ENCODE measurements at regions of chrX and their contacts with region 1.

Region 1: DNA sequence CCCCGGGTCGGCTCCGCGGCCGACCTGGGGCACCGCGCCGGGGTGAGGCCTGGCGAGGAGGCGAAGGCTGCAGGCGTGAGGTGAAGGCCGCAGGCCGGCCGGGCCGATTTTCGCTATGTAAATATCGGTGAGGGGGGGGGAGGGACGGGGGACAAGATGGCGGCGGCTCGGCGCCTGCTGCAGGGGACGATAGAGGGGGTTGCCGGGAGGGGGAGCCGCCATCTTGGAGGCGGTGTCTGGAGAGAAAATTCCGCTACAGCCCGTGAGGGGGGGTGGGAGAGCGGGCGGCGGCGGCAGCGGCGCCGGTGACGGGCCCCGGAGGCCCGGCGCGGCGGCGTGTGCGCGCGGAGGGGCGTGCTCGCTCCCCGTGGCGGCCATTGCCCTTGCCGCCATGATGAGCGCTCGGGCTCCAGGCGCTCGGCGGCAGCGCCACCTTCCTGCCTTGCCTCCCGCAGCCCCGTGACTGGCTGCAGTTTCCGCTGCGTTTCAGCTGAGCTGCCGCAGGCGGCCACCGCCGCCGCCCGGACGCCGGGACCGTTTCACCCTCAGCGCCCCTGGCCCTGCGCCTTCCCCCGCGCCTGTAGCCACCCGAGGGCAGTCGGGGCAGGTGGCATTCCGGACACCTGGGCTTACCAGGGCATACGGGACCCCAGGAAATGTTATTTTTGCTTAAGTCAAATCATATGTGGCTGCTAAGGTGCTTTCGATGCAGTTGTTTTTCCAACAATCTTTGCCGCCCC is 692 bp downstream of the ZFX start:
- DNase-seq: peak in 8 of 9 donors; percentile 67 to 95 (median 90)
- ATAC-seq: peak; percentile 89
- H3K4me3 ChIP-seq: peak overlapping the region; percentile 84
- H3K4me3 Mint-ChIP-seq: peak overlapping the region; percentile 85 to 97 (median 91)
- H3K27ac ChIP-seq: peak overlapping the region; percentile 98
- H3K27ac Mint-ChIP-seq: peak overlapping the region; percentile 83 to 94 (median 91)
- H3K4me1 ChIP-seq: peaks cover 28% of the 10 kb centered on the region in 2 donors
- H3K4me1 Mint-ChIP-seq: peaks cover 16 to 83% (median 66%) of the 10 kb centered on the region in 7 donors
- H3K27me3 ChIP-seq: no peaks in the 10 kb centered on the region
- H3K27me3 Mint-ChIP-seq: no peaks in the 10 kb centered on the region

Region 2: DNA sequence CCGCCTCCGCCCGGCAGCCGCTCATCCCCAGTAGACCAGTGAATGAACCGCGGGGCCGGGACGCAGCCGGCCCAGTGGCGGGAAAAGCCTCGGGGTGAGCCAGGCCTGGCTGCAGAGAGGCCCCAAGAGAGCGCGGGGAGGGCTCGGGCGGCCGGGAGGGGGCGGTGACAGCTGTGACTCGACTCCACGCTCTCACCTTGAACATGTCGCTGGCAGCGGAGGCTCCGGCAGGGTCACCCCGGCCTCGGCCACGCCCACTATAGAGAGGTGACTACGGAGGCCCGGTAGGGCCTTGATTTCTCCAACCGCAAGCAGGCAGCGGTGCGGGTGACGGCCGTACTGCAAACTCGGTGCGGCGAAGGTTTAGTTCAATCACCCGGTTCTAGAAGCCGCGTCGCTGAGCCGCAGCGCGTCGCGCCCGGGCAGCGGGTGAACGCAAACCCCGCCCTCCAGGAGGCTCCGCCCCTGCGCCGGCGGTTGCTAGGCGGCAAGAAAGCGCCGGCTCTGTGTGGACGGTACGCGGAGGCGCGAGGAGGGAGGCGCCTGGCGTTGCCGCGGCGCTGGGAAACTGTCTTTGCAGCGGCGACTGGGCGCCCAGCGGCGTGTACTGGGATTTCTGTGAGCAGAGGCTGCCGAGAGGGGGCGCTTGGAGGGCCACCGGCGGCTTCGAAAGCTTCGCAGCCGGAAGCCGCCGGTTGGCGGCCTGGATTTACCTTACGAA is 242.6 kb before region 1 on chrX and contains the starts of genes APOO and CXorf58:
- CTCF ChIA-PET with region 1: no interaction called
- POLR2A ChIA-PET with region 1: no interaction called
- intact Hi-C with region 1: loop called (anchors 1 kb)
- DNase-seq: peak; percentile 80 to 94 (median 91)
- ATAC-seq: peak; percentile 95
- H3K4me3 ChIP-seq: peak within 1 kb of the TSS; percentile 62
- H3K4me3 Mint-ChIP-seq: peak within 1 kb of the TSS; percentile 79 to 88 (median 83)
- H3K27ac ChIP-seq: peak within 1 kb of the TSS; percentile 88
- H3K27ac Mint-ChIP-seq: peak within 1 kb of the TSS; percentile 85 to 94 (median 90)
- H3K4me1 ChIP-seq: peaks cover 10 to 16% of the 10 kb centered on the region in 2 donors
- H3K4me1 Mint-ChIP-seq: peaks cover 0 to 17% (median 8%) of the 10 kb centered on the region in 7 donors
- H3K27me3 ChIP-seq: no peaks in the 10 kb centered on the region
- H3K27me3 Mint-ChIP-seq: no peaks in the 10 kb centered on the region
- total RNA-seq, gene APOO: 5.4 to 19.2 (median 7.5) TPM
- total RNA-seq, gene CXorf58: not detected

Region 3: DNA sequence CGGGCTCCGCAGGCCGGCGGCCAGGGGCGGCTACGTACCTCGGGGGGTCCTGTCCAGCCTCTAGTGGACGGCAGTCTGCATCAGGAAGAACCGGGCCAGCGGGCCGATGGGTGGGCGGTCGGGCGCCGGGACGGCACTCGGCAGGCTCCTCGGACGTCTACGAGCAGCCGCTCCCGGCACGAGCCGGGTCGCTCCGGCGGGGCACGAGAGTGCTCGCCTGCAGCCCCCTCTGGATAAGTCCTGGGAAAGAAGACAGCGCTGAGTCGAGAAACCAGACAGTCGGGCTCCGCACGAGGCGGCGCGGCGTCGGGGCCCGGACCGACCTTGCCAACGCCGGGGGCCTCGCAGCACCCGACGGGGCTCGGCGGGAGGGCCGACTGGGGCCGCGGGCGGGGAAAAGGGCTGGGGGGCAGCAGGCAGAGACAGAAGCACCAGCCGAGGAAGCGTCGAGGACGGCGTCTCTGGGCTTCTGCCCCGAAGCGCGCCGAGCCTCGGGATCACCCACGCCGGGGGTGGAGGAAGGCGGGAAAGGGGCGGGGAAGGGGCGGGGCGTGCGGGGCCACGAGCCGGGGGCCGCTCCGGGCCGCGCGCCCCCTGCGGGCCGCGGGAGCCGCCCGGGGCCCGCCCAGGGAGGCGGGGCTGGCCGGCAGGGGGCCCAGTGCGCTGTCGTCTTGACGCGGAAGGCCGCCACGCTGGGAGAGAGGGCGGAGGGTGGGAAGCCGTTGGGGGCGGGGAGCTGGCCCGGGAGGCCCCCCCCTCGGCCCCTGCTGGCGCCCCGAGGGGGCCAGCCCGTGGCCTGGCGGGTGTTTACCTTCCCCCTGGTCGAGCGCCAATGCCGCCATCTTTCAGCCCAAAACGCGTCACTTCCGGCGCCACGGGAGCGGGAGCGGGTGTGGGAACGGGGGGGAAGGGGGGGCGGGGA is 125.1 kb before region 1 on chrX:
- CTCF ChIA-PET with region 1: no interaction called
- POLR2A ChIA-PET with region 1: no interaction called
- intact Hi-C with region 1: loop called (anchors 1 kb)
- DNase-seq: peak; percentile 68 to 82 (median 76)
- ATAC-seq: peak; percentile 96
- H3K4me3 ChIP-seq: peak overlapping the region; percentile 74
- H3K4me3 Mint-ChIP-seq: peak overlapping the region; percentile 71 to 94 (median 86)
- H3K27ac ChIP-seq: peak overlapping the region; percentile 96
- H3K27ac Mint-ChIP-seq: peak overlapping the region in 7 of 9 donors; percentile 48 to 92 (median 85)
- H3K4me1 ChIP-seq: no peaks in the 10 kb centered on the region
- H3K4me1 Mint-ChIP-seq: peaks cover 7 to 38% (median 27%) of the 10 kb centered on the region in 7 donors
- H3K27me3 ChIP-seq: no peaks in the 10 kb centered on the region
- H3K27me3 Mint-ChIP-seq: peaks cover 0 to 3% (median 0%) of the 10 kb centered on the region in 5 donors

Region 4: DNA sequence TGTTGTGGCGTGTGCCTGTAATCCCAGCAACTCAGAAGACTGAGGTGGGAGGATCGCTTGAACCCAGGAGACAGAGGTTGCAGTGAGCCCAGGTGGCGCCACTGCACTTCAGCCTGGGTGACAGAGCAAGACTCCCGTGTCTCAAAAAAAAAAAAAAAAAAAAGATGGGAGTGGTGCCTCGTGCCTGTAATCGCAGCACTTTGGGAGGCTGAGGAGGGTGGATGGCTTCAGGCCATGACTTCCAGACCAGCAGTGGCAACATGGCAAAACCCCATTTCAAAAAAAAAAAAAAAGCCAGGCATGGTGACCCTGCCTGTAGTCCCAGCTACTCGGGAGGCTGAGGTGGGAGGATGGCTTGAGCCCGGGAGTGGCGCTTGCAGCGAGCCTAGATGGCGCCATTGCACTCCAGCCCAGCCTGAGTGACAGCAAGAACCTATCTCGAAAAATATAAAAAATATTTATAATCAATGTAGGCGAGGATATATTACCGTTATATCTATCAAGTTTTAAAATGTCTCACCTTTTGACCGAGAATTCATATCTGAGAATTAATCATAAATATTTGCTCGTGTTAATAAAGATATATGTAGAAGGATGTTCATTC is 68.5 kb before region 1 on chrX:
- CTCF ChIA-PET with region 1: no interaction called
- POLR2A ChIA-PET with region 1: no interaction called
- intact Hi-C with region 1: loop called (anchors 1 kb)
- DNase-seq: peak; percentile 7 to 54 (median 43)
- ATAC-seq: peak; percentile 75
- H3K4me3 ChIP-seq: no peak overlapping the region
- H3K4me3 Mint-ChIP-seq: peak overlapping the region in 2 of 10 donors; percentile 23 to 38
- H3K27ac ChIP-seq: no peak overlapping the region
- H3K27ac Mint-ChIP-seq: no peak overlapping the region
- H3K4me1 ChIP-seq: no peaks in the 10 kb centered on the region
- H3K4me1 Mint-ChIP-seq: peaks cover 0 to 11% (median 7%) of the 10 kb centered on the region in 7 donors
- H3K27me3 ChIP-seq: no peaks in the 10 kb centered on the region
- H3K27me3 Mint-ChIP-seq: no peaks in the 10 kb centered on the region

Region 5: GRCh38 chrX:24184018-24184417 is 33.8 kb after region 1 on chrX:
- CTCF ChIA-PET with region 1: no interaction called
- POLR2A ChIA-PET with region 1: no interaction called
- intact Hi-C with region 1: loop called in 1 of 2 experiments (anchors 5 kb)
- DNase-seq: no peak
- ATAC-seq: no peak
- H3K4me3 ChIP-seq: no peak overlapping the region
- H3K4me3 Mint-ChIP-seq: peak overlapping the region in 4 of 10 donors; percentile 20 to 37 (median 28)
- H3K27ac ChIP-seq: no peak overlapping the region
- H3K27ac Mint-ChIP-seq: peak overlapping the region in 2 of 9 donors; percentile 19 to 48
- H3K4me1 ChIP-seq: no peaks in the 10 kb centered on the region
- H3K4me1 Mint-ChIP-seq: peaks cover 5 to 58% (median 39%) of the 10 kb centered on the region in 7 donors
- H3K27me3 ChIP-seq: no peaks in the 10 kb centered on the region
- H3K27me3 Mint-ChIP-seq: no peaks in the 10 kb centered on the region

Region 6: DNA sequence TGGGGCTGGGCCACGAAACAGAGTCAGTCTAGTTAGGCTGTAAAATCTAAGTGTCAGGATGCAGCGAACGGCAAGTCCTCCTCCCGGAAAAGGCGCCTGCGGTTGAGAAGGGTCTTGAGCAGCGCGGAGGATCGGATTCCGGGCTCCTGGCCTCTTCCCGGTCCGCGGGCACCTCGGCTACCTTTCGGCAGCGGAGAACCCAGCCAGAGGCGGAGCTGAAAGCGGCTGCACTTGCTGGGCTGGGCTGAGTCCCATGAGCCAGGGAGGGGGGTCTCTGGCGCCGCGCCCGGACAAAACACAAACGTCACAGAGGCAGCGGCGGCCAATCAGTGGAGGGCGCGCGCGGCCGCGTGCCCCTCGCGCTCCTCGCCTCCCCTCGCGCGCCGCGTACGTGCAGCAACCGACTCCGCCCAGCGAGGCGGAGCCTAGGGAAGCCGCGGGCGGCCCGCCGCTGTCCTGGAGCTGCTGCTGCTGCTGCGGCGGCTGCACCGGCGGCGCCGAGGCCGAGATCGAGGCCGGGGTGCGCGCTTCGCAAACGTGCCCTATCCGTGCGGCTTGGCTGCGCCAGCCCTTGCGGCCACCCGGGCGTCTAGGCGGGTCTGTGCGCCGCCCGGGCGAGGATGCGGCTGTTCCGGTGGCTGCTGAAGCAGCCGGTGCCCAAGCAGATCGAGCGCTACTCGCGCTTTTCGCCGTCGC is 314.8 kb after region 1 on chrX and contains the start of gene PDK3:
- CTCF ChIA-PET with region 1: no interaction called
- POLR2A ChIA-PET with region 1: no interaction called
- intact Hi-C with region 1: loop called (anchors 1 to 5 kb)
- DNase-seq: peak; percentile 81 to 92 (median 89)
- ATAC-seq: peak; percentile 98
- H3K4me3 ChIP-seq: peak within 1 kb of the TSS; percentile 70
- H3K4me3 Mint-ChIP-seq: peak within 1 kb of the TSS; percentile 48 to 90 (median 85)
- H3K27ac ChIP-seq: peak within 1 kb of the TSS; percentile 92
- H3K27ac Mint-ChIP-seq: peak within 1 kb of the TSS; percentile 77 to 97 (median 93)
- H3K4me1 ChIP-seq: peaks cover 14 to 24% of the 10 kb centered on the region in 2 donors
- H3K4me1 Mint-ChIP-seq: peaks cover 7 to 37% (median 33%) of the 10 kb centered on the region in 7 donors
- H3K27me3 ChIP-seq: no peaks in the 10 kb centered on the region
- H3K27me3 Mint-ChIP-seq: no peaks in the 10 kb centered on the region
- total RNA-seq, gene PDK3: 17.4 to 29.4 (median 28.5) TPM